OCI-LY7 (cell line): ENCODE measurements at regions of chr2 and their contacts with region 1.

Region 1: DNA sequence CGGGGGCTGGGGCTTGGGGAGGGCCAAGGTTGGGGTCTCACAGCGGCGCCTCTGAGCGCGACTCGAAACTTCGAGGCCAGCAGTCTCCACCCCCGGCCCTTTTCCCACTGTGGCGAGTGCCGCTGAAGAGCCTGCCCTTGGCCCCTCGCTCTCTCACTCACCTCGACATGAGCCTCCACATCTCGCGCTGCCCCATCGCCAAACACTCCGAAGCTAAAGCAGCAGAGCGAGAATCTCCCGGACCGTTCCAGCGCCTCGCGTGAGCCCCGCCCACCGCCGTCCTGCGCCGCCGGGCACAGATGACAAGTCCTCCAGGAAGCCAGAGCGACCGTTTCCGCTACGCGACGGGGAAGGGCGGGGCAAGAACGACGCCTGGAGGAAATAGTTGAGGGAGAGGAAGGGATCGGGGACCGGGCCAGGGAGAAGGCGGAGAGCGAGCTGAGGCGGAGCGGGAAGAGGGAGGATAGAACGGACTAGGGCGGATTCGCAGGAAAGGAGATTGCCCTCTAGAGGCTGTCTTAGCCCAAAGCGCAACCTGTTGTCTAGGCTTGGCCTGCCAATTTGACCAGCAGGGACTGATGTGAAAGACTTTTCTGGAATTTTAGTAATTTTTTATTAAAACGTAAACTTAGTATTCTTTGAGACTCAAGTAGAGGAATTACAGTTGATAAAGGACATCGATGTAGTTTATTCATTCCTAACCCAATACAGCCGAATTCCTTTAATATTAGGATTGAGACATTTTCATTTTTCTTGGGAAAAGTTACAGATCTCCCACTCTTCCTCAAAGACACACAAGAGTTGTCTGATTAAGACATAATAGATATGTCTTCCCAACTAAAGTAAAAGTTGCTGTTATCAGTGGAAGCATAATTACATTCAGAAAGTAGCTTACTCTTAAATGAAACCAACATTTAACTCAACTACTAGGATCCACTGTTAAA is at the start of gene HIBCH:
- DNase-seq: peak; percentile 92
- H3K4me3 ChIP-seq: peak within 1 kb of the TSS; percentile 74
- H3K27ac ChIP-seq: peak within 1 kb of the TSS; percentile 62
- H3K4me1 ChIP-seq: peaks cover 28% of the 10 kb centered on the region
- CTCF ChIP-seq: peak; percentile 78
- total RNA-seq, gene HIBCH: 15.6 and 17.1 TPM in 2 replicates

Region 2: GRCh38 chr2:189440947-189441708 is 878.7 kb before region 1 on chr2 and contains the start of gene WDR75:
- CTCF ChIA-PET with region 1: no interaction called
- POLR2A ChIA-PET with region 1: interaction called, 3 read pairs
- intact Hi-C with region 1: loop called (anchors 1 kb)
- DNase-seq: peak; percentile 95
- H3K4me3 ChIP-seq: peak within 1 kb of the TSS; percentile 76
- H3K27ac ChIP-seq: peak within 1 kb of the TSS; percentile 71
- H3K4me1 ChIP-seq: peaks cover 26% of the 10 kb centered on the region
- CTCF ChIP-seq: no peak
- total RNA-seq, gene WDR75: 44.1 and 79.6 TPM in 2 replicates

Region 3: DNA sequence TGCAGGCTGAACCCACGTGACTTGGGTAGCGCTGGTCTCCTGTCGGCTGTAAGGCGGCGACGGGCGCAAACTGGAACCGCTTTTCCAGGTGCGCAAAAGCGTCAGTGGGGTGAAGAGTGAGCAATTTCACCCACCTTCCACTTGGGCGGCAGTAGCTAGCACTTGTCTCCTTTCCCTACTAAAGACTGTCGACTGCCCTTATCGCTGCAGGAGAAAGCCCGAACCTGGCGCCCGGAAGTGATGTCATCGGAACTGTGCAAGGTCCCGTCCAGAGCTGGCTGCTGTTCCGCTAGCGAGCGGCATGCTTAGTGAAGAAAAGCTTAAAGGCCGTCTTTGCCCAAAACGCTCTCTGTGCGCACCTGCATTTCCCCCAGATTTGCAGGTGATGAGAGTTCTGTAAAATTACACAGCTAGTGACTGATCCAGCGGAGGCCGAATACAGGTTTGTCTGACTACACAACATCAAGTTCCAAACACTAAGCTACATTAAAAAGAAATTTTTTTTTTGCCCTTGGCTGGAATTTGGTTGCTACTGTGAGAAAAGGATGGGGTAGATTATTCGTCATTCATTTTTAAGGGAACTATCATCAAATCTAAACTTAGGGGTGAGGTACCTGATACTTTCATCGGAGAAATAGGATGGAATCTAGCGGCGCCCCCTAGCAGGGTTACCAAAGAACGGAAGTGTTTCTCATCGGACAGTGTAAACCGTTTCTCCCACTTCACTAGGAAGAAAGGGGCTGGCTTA is 557.1 kb before region 1 on chr2 and contains the start of gene OSGEPL1:
- CTCF ChIA-PET with region 1: no interaction called
- POLR2A ChIA-PET with region 1: interaction called, 4 read pairs
- intact Hi-C with region 1: loop called (anchors 2 kb)
- DNase-seq: peak; percentile 96
- H3K4me3 ChIP-seq: peak within 1 kb of the TSS; percentile 82
- H3K27ac ChIP-seq: peak within 1 kb of the TSS; percentile 97
- H3K4me1 ChIP-seq: peaks cover 20% of the 10 kb centered on the region
- CTCF ChIP-seq: peak; percentile 85
- total RNA-seq, gene OSGEPL1: 8.7 and 10.4 TPM in 2 replicates

Region 4: GRCh38 chr2:190180313-190181122 is 139.3 kb before region 1 on chr2:
- CTCF ChIA-PET with region 1: interaction called, 4 read pairs
- POLR2A ChIA-PET with region 1: no interaction called
- intact Hi-C with region 1: loop called (anchors 2 kb)
- DNase-seq: peak; percentile 22
- H3K4me3 ChIP-seq: peak overlapping the region; percentile 56
- H3K27ac ChIP-seq: no peak overlapping the region
- H3K4me1 ChIP-seq: peaks cover 9% of the 10 kb centered on the region
- CTCF ChIP-seq: peak; percentile 63

Region 5: DNA sequence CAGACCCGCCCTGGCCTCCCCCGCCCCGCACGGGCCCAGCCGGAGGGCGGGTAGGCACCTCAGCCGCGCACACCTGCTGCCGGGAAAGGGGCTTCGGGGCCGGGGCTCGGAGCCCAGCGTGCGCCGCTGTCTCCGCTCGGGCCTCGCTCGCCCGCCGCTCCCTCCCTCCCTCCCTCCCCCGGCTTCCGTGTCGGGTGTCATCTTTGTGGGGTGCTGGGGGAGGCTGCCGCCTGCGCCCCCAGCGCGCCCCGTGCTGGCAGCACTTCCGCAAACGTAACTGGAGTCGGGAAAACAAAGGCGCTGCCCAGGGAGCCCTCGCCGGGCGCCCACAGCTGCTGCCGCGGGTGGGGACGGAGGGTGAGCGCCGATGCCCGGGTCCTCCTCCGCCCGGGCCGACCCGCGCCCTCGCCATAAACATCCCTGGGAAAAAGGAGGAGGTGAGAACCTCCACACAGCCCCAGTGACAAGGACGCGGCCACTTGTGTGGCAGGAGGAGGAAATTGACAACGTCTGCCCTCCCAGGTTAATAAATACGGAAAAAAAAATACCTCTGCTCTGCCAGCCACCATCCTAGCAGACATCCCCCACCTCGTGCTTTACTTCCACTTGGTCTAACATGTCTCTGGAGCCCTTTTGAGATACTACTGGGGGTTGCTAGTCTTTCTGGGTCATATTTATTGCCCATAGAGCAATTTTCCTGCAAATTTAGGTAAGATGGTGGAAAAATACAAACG is 88.9 kb after region 1 on chr2:
- CTCF ChIA-PET with region 1: no interaction called
- POLR2A ChIA-PET with region 1: interaction called, 5 read pairs
- intact Hi-C with region 1: loop called (anchors 2 kb)
- DNase-seq: peak; percentile 65
- H3K4me3 ChIP-seq: peak overlapping the region; percentile 84
- H3K27ac ChIP-seq: peak overlapping the region; percentile 46
- H3K4me1 ChIP-seq: peaks cover 16% of the 10 kb centered on the region
- CTCF ChIP-seq: no peak